Activated CD4-positive, alpha-beta T cell treated with anti-CD3 and anti-CD28 coated beads, Interleukin-2, amount 10 ng/mL, durations not matched to agents 24 days and 14 days (primary cell): ENCODE measurements at regions of chr17 and their contacts with region 1.

Region 1: GRCh38 chr17:48878918-48879898 is 13.4 kb upstream of the ATP5MC1 start:
- DNase-seq: peak; percentile 89
- H3K4me3 Mint-ChIP-seq: no peak overlapping the region
- H3K27ac Mint-ChIP-seq: no peak overlapping the region
- H3K4me1 Mint-ChIP-seq: peaks cover 8% of the 10 kb centered on the region
- H3K27me3 Mint-ChIP-seq: peaks cover 6% of the 10 kb centered on the region

Region 2: DNA sequence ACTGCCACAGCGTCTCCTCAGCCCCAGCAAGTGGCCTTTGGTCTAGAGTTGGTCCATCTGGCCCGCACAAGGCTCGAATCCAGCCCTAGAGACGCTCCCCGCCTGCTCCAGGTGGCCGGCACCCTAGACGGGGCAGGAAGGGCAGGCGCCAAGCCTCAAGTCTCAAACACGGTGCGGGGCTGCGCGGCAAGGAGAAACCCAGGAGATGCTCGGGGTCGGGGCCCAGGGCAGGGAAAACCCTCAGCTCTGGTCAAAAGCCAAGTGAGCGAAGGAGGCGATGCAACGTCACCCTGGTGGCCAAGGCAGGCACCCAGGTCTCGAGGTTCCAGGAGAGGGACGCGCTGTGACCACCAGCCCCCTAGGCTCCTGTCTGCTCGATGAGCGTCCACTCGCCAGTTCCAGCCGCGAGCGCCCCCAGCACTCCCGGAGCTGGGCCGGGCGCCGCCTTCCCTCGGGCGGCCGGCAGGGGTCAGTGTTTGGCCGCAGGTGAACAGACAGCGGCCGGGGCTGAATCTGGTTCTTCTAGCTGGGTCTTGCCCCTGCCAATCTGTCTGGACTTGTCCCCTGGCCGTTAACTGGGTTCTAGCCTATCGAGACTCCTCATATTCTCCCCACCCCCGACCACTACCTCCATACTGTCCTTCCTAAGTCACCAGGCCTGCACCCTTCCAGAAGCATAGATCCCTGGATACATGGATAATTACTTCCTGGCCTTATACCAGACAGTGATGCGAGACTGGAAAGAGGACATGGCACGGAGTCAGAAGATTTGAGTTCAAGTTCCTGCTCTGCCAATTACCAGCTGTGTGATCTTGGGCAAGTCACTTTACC is 200.9 kb before region 1 on chr17:
- intact Hi-C with region 1: loop called (anchors 2 kb)
- DNase-seq: peak; percentile 92
- H3K4me3 Mint-ChIP-seq: no peak overlapping the region
- H3K27ac Mint-ChIP-seq: no peak overlapping the region
- H3K4me1 Mint-ChIP-seq: peaks cover 5% of the 10 kb centered on the region
- H3K27me3 Mint-ChIP-seq: peaks cover 63% of the 10 kb centered on the region

Region 3: DNA sequence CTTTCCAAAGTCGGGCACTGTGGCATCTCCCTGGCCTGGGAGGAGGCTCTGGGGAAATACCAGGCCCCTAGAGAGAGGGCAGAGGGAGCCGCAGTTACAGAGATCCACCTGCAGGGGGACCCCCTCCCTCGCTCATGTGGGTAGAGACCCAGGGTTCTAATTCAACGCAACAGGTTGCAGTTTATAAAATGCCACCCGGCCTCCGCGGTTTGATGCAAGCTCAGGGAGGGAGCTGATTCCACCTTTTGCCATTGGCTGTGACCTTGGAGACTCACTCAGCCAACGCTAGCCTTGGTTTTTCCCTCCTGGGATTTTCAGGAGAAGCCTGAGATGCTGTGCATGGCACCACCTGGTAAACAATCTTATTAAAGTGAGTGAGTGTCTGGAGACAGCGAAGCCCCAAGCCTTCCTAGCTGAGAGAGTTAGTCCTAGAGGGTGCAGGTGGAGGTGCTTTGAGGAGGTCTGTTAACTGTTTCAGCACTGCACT is 74.2 kb before region 1 on chr17:
- intact Hi-C with region 1: loop called (anchors 1 kb)
- DNase-seq: peak; percentile 91
- H3K4me3 Mint-ChIP-seq: no peak overlapping the region
- H3K27ac Mint-ChIP-seq: no peak overlapping the region
- H3K4me1 Mint-ChIP-seq: no peaks in the 10 kb centered on the region
- H3K27me3 Mint-ChIP-seq: peaks cover 21% of the 10 kb centered on the region

Region 4: DNA sequence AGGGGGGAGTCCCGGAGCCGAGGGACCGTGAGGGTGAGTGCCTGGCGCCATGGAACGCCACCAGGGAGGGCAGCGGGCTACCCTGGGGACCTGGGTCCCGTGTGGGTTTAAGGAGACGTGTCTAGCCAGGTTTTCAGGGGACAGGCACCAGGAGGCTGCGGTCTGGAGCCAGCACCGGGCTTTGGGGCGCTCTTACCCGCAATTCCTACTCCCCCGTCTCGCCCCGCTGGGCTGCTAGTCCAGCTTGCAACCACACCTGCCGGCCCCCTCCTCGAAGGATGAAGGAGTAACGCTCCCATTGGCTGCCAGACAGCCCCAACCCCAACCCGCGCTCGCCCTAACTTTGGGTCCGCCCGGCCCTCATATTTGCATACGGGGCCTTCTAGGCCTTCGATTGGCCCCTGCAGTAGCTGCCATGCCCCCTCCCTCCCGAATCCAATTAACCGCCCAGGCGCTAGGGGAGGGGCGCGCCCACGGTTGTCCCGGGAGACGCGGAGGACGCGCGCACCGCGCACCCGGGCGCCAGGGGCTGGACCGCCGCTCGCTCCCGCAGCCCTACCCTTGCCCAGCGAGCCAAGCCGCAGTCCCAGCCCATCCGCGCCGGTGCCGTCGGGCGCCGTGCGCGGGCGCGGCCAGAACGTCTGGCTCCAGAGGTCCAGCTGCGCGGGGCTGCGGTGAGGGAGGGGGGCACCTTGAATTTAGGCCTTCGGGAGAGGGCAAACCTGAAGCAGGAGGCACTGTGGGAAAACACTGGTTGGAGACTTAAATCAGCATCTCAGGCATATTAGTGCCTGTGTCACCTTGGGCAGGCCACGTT is 62.2 kb before region 1 on chr17 and contains the start of gene TTLL6:
- intact Hi-C with region 1: loop called (anchors 1 kb)
- DNase-seq: peak; percentile 95
- H3K4me3 Mint-ChIP-seq: peak within 1 kb of the TSS; percentile 86
- H3K27ac Mint-ChIP-seq: no peak within 1 kb of the TSS
- H3K4me1 Mint-ChIP-seq: peaks cover 20% of the 10 kb centered on the region
- H3K27me3 Mint-ChIP-seq: peaks cover 65% of the 10 kb centered on the region
- total RNA-seq, gene TTLL6: not detected in 2 replicates

Region 5: GRCh38 chr17:48892940-48893645 is 13.9 kb after region 1 on chr17:
- intact Hi-C with region 1: no loop called
- DNase-seq: no peak
- H3K4me3 Mint-ChIP-seq: peak overlapping the region; percentile 90
- H3K27ac Mint-ChIP-seq: peak overlapping the region; percentile 97
- H3K4me1 Mint-ChIP-seq: peaks cover 18% of the 10 kb centered on the region
- H3K27me3 Mint-ChIP-seq: peaks cover 3% of the 10 kb centered on the region

Region 6: GRCh38 chr17:49031965-49032928 is 153.0 kb after region 1 on chr17:
- intact Hi-C with region 1: loop called (anchors 2 kb)
- DNase-seq: peak; percentile 85
- H3K4me3 Mint-ChIP-seq: no peak overlapping the region
- H3K27ac Mint-ChIP-seq: no peak overlapping the region
- H3K4me1 Mint-ChIP-seq: peaks cover 6% of the 10 kb centered on the region
- H3K27me3 Mint-ChIP-seq: peaks cover 7% of the 10 kb centered on the region